ENCODE measurements at regions of chr15 and their contacts with region 1.

Region 1: DNA sequence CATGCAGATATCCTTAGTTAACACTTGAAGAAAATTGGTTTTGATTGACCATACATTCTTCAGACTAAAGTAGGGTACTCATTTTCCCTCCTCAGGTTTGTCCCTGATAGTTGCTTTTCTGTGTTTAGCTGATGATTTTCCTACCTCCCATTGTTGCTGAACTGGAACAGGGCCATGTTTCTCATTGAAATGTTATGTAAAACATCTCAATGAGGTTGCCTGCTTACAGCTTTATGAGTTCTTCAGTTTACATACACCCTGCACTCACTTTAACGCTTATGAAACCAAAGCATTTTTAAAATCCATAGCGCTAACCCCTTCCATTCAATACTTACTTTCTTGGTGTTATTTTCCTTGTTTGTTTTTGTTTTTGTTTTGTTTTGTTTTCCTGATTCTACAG is 61.9 kb downstream of the HMG20A start:
- DNase-seq: no peak
- ATAC-seq: no peak
- H3K4me3 ChIP-seq: no peak overlapping the region
- H3K27ac ChIP-seq: peak overlapping the region; percentile 68
- H3K4me1 ChIP-seq: peaks cover 55% of the 10 kb centered on the region
- H3K27me3 ChIP-seq: no peaks in the 10 kb centered on the region
- CTCF ChIP-seq: no peak

Region 2: DNA sequence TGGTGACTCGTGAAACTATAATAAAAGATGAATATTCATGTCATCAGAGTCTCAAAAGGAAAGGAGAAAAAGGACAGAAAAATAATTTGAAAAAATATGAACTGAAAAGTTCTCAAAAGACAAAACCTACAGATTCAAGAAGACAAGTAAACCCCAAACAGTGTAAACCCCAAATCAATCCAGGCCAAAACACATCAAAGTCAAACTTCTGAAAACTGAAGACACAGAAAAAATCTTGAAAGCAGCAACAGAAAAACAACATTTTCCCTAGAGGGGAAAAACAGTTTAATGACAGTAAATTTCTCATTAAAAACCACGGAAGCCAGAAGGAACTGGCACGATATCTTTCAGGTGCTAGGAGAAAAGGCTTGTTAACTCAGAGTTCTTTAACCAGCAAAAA is 206.5 kb before region 1 on chr15:
- intact Hi-C with region 1: no loop called
- DNase-seq: no peak
- ATAC-seq: no peak
- H3K4me3 ChIP-seq: no peak overlapping the region
- H3K27ac ChIP-seq: no peak overlapping the region
- H3K4me1 ChIP-seq: no peaks in the 10 kb centered on the region
- H3K27me3 ChIP-seq: no peaks in the 10 kb centered on the region
- CTCF ChIP-seq: no peak

Region 3: GRCh38 chr15:77347208-77347607 is 135.4 kb before region 1 on chr15:
- intact Hi-C with region 1: loop called in 1 of 2 experiments (anchors 5 kb)
- DNase-seq: no peak
- ATAC-seq: no peak
- H3K4me3 ChIP-seq: no peak overlapping the region
- H3K27ac ChIP-seq: no peak overlapping the region
- H3K4me1 ChIP-seq: peaks cover 19% of the 10 kb centered on the region
- H3K27me3 ChIP-seq: no peaks in the 10 kb centered on the region
- CTCF ChIP-seq: no peak

Region 4: GRCh38 chr15:77419836-77420609 is 62.5 kb before region 1 on chr15 and contains the start of gene PEAK1:
- intact Hi-C with region 1: loop called in 1 of 2 experiments (anchors 5 kb)
- DNase-seq: peak; percentile 100
- ATAC-seq: peak; percentile 96 to 99 (median 98)
- H3K4me3 ChIP-seq: peak within 1 kb of the TSS; percentile 91
- H3K27ac ChIP-seq: peak within 1 kb of the TSS; percentile 97
- H3K4me1 ChIP-seq: peaks cover 58% of the 10 kb centered on the region
- H3K27me3 ChIP-seq: no peaks in the 10 kb centered on the region
- CTCF ChIP-seq: no peak
- total RNA-seq, gene PEAK1: 25.3 to 32.1 (median 28.8) TPM

Region 5: GRCh38 chr15:77436822-77437221 is 45.7 kb before region 1 on chr15:
- intact Hi-C with region 1: loop called in 1 of 2 experiments (anchors 5 kb)
- DNase-seq: no peak
- ATAC-seq: no peak
- H3K4me3 ChIP-seq: no peak overlapping the region
- H3K27ac ChIP-seq: no peak overlapping the region
- H3K4me1 ChIP-seq: peaks cover 21% of the 10 kb centered on the region
- H3K27me3 ChIP-seq: no peaks in the 10 kb centered on the region
- CTCF ChIP-seq: no peak

Measured in psoas muscle (tissue), 8 donors.